Posterior vena cava (tissue), 2 donors: ENCODE measurements at regions of chr19 and their contacts with region 1.

Region 1: DNA sequence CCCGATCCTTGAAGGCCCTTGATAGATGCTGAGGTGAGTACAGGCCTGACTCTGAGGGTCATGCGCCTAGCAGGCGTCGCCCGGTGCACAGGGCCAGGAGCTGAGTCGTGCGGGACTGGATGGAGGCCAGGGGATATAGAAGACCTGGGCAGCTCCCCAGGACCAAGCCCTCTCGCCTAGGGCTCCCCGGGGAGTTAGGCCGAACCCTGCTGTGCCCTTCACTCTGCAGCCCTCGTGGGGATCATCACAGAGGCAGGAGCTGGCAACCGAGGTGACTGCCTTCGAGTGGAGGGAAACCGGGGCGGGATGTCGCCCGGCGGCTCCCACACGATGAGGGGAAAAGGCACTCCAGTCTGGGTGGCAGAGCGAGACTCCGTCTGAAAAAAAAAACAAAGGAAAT is 11.7 kb downstream of the CSNK1G2 start:
- DNase-seq: no peak

Region 2: GRCh38 chr19:1975162-1975480 is 22.5 kb after region 1 on chr19:
- intact Hi-C with region 1: no loop called
- DNase-seq: no peak

Region 3: DNA sequence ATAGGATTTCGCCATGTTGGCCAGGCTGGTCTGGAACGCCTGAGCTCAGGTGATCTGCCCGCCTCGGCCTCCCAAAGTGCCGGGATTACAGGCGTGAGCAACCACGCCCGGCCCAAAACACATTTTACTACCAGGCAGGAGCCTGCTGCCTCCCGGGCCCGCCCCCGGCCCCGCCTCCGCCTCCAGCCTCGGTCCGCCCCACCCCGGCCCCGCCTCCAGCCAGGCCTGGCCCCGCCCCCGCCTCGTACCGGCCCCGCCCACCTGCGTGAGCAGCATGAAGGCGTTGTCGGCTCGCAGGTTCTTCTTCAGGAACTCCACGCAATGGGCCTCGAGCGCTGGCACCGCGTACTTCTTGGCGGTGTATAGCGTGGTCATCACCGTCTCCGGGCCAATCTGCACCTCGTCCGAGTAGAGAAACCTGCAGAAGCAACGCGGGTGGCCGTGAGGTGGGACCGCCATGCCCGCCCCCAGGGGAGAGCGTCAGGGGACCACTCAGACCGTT is 40.2 kb after region 1 on chr19:
- intact Hi-C with region 1: loop called in 1 of 2 experiments (anchors 2 kb)
- DNase-seq: no peak